ENCODE measurements at regions of chr6 and their contacts with region 1.

Region 1: GRCh38 chr6:11324453-11325015 is 92.1 kb upstream of the NEDD9 start:
- DNase-seq: peak; percentile 31
- H3K4me3 Mint-ChIP-seq: peak overlapping the region; percentile 40
- H3K27ac Mint-ChIP-seq: peak overlapping the region; percentile 89
- H3K4me1 Mint-ChIP-seq: peaks cover 69% of the 10 kb centered on the region
- H3K27me3 Mint-ChIP-seq: no peaks in the 10 kb centered on the region

Region 2: DNA sequence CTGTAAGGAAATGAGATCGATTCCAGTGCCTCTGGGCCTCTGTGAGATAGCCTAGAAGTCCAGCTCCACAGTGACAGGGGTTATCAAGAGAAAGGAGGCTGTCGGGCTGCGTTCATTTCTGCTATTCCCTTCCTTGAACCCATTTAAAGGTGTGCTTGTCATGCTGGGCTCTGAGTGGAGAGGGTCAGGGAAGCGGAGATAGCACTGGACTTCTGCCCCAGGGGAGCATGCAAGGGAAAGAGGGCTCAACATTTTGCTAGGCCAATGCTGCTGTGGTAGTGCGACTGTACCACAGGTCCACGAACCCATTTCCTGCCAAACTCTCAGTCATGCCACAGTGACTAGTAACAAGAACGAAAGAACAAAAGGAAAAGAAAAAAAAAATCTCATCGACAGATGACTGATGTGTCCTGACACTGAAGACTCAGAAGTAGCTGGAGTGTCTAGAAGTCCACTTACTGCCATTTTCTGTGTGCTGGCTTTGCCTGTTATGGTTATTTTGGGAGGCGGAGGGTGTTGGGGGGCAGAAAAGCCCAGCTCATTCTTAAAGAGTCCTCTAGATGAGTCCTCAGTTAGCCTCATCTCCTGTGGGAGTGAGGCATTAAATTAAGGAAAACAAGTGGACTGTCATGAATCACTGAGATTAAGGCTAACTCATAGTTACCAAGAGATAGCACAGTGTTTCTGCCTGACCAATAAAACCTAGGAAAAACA is 100.1 kb before region 1 on chr6:
- intact Hi-C with region 1: loop called (anchors 1 kb)
- DNase-seq: peak; percentile 51
- H3K4me3 Mint-ChIP-seq: peak overlapping the region; percentile 38
- H3K27ac Mint-ChIP-seq: peak overlapping the region; percentile 80
- H3K4me1 Mint-ChIP-seq: peaks cover 67% of the 10 kb centered on the region
- H3K27me3 Mint-ChIP-seq: no peaks in the 10 kb centered on the region

Region 3: DNA sequence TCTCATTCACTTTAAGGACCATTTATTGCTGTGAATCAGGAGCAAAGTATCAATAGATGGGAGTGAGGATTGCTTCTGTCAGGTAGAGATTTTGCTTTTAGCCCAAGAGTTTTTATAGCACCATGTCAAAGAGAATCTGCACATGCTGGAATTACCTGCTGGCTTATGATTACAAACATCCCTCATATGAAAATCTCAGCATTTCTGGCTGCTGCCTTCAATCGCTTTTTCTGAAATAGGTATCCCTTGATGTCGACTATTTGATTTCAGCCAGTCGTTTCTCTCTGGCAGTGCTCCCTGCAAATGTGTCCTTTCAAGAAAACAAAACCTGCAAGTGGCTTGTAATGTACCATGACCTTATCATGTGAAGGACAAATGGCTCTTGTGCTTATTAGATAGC is 57.6 kb before region 1 on chr6:
- intact Hi-C with region 1: no loop called
- DNase-seq: no peak
- H3K4me3 Mint-ChIP-seq: no peak overlapping the region
- H3K27ac Mint-ChIP-seq: no peak overlapping the region
- H3K4me1 Mint-ChIP-seq: peaks cover 17% of the 10 kb centered on the region
- H3K27me3 Mint-ChIP-seq: no peaks in the 10 kb centered on the region

Region 4: GRCh38 chr6:11277275-11278206 is 47.0 kb before region 1 on chr6:
- intact Hi-C with region 1: loop called (anchors 5 kb)
- DNase-seq: no peak
- H3K4me3 Mint-ChIP-seq: no peak overlapping the region
- H3K27ac Mint-ChIP-seq: peak overlapping the region; percentile 95
- H3K4me1 Mint-ChIP-seq: peaks cover 38% of the 10 kb centered on the region
- H3K27me3 Mint-ChIP-seq: no peaks in the 10 kb centered on the region

Region 5: DNA sequence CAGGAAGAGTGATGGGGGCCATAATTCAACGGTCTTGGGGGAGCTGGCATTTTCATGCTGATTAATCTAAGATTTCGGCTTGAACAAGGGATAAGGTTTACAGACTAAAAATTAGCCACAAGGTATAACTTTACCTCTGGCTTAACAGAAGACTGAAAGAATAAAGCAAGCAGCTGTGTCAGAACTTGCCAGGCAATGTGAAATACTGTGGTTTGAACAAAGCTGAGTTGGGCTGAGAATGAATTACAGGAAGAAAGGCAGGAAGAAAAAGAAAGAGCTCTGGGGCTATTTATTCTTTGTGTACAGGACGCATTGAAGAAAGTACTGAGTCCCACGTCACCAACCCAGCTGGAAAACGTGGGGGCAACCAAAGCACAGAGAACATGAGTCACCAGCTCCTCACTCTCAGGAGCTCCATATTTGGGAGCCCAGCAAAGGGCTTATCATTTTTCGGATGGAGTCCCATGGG is 29.4 kb after region 1 on chr6:
- intact Hi-C with region 1: loop called (anchors 1 kb)
- DNase-seq: peak; percentile 44
- H3K4me3 Mint-ChIP-seq: peak overlapping the region; percentile 18
- H3K27ac Mint-ChIP-seq: peak overlapping the region; percentile 94
- H3K4me1 Mint-ChIP-seq: peaks cover 69% of the 10 kb centered on the region
- H3K27me3 Mint-ChIP-seq: no peaks in the 10 kb centered on the region

Region 6: DNA sequence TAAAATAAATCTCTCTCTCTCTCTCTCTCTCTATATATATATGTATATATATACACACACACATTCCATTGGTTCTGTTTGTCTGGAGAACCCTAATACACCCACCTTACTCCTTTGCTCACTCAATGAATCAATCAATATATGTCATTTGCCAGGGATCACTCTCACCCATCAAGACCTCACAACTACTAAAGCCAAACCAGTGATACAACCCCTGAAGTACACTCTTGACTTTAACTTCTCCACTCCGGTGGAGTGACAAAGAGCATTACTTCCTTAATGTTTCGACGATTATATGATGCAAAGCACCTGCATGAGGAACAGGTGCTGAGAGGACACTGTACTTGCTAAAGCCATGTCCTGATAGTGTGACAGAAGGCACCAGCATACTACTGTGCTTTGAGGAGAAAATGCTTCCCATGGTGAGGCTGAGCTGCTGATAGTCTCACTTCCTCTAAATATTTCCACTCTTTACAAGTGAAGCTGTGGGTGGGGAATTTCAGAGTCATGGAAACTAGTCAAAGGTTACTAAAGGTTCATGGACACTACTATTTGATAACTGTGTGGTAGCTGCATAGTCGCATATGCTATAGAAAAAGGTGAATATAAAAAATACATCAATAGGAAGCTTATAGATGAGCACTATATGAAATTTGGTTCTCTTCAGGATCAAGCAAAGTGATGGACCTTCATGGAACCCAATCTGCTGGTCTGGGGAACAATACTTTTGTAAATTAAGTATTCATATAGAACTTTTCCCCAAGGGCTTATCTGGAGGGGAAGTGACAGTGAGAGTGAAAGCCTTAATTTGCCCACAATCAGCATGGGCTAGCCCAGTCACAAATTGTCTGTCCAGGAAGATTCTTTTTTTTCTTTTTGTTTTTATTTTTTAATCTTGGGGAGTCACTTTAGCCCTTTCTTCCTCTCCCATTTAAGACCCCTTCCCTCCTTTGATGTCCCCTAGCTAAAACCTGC is 49.8 kb after region 1 on chr6:
- intact Hi-C with region 1: loop called (anchors 2 kb)
- DNase-seq: no peak
- H3K4me3 Mint-ChIP-seq: peak overlapping the region; percentile 28
- H3K27ac Mint-ChIP-seq: peak overlapping the region; percentile 86
- H3K4me1 Mint-ChIP-seq: peaks cover 58% of the 10 kb centered on the region
- H3K27me3 Mint-ChIP-seq: no peaks in the 10 kb centered on the region

Region 7: DNA sequence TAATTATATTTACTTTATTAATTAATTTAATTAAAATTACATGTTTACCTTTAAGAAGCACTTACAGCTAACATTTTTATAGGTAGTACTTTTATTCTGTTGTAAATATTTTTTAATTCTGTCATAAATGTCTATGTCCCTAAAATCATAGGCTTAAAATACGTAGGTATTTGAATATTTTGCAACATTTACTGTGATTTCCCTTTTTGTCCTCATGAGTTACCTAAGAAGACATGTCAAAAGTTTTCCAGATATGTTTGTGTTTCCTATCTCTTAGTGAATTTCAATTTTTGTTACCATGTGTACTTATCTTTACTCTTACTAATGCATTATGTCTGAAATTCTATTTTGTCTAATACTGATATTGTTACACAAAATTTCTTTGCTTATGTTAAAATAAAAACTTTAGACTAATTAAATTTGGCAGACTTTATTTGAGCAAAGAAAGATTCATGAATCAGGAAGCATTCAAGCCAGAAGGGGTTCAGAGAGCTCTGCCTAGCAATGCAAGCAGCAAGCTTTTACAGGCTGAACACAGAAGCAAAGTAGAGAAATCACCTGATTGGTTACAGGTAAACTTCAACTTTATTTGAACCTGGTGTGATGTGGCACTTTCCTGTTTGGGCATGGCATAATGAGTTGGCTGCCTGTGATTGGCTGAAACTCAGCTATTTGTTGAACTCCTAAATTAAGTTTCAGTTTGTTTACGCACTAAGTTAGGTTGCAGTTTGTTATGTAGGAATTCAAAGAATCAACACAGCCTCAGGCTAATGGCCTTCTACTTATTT is 89.8 kb after region 1 on chr6:
- intact Hi-C with region 1: loop called (anchors 1 kb)
- DNase-seq: peak; percentile 24
- H3K4me3 Mint-ChIP-seq: no peak overlapping the region
- H3K27ac Mint-ChIP-seq: no peak overlapping the region
- H3K4me1 Mint-ChIP-seq: peaks cover 62% of the 10 kb centered on the region
- H3K27me3 Mint-ChIP-seq: no peaks in the 10 kb centered on the region

Region 8: DNA sequence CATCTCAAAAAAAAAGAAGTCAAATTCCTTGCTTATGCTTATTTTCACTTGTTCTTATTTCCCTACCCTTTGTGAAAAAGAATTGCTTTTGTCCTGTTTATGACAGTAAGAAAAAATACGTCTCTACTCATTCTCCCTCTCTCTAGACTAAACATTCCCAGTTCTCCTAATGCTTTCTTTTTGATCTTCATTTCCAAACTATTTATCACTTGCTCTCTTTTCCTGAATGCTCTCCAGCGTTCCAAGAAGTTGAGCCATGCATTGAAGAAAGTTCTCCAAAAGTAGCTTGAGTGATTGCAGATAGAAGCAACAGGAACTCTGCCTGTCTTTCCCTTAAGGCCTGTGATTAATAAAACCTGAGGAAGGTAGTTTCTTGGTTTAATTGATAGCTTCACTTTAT is 159.9 kb after region 1 on chr6:
- intact Hi-C with region 1: no loop called
- DNase-seq: no peak
- H3K4me3 Mint-ChIP-seq: no peak overlapping the region
- H3K27ac Mint-ChIP-seq: no peak overlapping the region
- H3K4me1 Mint-ChIP-seq: no peaks in the 10 kb centered on the region
- H3K27me3 Mint-ChIP-seq: peaks cover 5% of the 10 kb centered on the region

Region 9: DNA sequence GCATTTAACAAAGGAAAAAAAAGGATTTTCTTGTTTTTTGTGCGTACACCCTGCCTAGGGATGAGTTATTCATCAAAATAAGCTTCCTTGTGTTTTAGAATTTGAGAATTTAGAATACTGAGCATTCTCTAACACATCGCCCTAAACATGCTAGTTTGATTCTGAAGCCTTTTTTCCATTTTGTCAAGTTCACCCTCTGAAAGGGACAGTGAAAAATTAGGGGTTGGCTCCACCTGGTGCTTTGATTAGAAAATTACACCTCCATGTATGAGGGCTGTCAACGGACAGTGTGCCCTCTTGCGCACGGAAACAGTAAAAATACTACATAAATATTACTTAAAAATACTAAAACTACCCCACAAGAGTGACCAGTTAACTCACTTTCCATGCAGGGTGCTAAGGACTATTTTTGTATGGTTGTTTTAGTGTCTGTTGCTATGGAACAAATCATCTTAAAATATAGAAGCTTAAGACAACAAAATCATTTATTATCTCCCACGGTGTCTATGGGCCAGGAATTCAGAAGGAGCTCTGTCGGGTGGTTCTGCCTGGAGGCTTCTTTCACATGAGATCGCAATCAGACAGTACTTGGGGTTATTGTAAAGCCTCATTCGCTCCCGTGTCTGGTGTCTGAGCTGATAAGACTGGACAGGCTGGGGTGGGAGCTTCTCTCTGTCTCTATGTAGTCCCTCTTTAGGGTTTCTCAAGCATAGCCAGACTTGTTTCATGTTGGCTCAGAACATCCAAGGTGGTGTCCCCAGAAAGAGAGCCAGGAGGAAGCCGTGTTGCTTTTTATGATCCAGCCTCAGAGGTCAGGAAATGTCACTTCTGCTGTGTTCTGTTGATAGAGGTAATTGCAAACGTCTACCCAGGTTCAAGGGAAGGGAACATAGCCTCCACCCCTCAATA is 171.9 kb after region 1 on chr6:
- intact Hi-C with region 1: loop called (anchors 5 kb)
- DNase-seq: peak; percentile 55
- H3K4me3 Mint-ChIP-seq: no peak overlapping the region
- H3K27ac Mint-ChIP-seq: no peak overlapping the region
- H3K4me1 Mint-ChIP-seq: peaks cover 3% of the 10 kb centered on the region
- H3K27me3 Mint-ChIP-seq: no peaks in the 10 kb centered on the region

Region 10: GRCh38 chr6:11770546-11771466 is 446.3 kb after region 1 on chr6:
- intact Hi-C with region 1: no loop called
- DNase-seq: no peak
- H3K4me3 Mint-ChIP-seq: no peak overlapping the region
- H3K27ac Mint-ChIP-seq: no peak overlapping the region
- H3K4me1 Mint-ChIP-seq: peaks cover 2% of the 10 kb centered on the region
- H3K27me3 Mint-ChIP-seq: peaks cover 2% of the 10 kb centered on the region